Activated CD8-positive, alpha-beta memory T cell treated with anti-CD3 and anti-CD28 coated beads, Interleukin-2, amount 10 ng/mL, durations not matched to agents 7 days and 5 days (primary cell): ENCODE measurements at regions of chr5 and their contacts with region 1.

Region 1: DNA sequence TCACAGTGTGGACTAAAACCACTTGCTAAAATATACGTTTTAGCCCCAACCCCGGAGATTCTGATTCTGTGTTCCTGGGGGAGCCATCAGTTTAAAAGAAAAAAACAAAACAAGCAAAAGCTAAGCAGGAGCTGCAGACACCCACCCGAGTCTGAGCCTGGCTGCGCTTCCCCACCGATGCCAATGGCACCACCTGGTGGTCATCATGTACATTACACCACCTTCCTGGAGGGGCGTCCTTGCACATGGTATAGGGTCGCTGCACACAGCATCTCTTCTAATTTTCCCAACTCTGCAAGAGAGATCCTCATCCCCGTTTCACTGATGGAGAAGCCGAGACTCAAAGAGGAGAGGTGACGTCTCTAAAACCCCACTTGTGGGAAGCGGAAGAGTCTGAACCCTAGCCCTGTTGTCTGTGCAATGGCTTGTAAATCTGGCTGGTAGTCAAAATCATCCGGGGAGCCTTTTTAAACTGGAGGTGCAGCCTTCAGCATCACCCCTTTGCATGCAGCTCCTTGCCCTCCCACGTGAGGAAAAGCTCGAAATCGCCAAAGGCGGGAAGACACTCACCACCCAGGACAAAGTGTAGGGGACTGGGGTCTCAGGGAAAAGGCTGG is 23.1 kb upstream of the CNOT6 start:
- DNase-seq: peak; percentile 66
- ATAC-seq: peak; percentile 83
- H3K4me3 Mint-ChIP-seq: no peak overlapping the region
- H3K27ac Mint-ChIP-seq: no peak overlapping the region
- H3K4me1 Mint-ChIP-seq: no peaks in the 10 kb centered on the region
- H3K27me3 Mint-ChIP-seq: peaks cover 19% of the 10 kb centered on the region

Region 2: DNA sequence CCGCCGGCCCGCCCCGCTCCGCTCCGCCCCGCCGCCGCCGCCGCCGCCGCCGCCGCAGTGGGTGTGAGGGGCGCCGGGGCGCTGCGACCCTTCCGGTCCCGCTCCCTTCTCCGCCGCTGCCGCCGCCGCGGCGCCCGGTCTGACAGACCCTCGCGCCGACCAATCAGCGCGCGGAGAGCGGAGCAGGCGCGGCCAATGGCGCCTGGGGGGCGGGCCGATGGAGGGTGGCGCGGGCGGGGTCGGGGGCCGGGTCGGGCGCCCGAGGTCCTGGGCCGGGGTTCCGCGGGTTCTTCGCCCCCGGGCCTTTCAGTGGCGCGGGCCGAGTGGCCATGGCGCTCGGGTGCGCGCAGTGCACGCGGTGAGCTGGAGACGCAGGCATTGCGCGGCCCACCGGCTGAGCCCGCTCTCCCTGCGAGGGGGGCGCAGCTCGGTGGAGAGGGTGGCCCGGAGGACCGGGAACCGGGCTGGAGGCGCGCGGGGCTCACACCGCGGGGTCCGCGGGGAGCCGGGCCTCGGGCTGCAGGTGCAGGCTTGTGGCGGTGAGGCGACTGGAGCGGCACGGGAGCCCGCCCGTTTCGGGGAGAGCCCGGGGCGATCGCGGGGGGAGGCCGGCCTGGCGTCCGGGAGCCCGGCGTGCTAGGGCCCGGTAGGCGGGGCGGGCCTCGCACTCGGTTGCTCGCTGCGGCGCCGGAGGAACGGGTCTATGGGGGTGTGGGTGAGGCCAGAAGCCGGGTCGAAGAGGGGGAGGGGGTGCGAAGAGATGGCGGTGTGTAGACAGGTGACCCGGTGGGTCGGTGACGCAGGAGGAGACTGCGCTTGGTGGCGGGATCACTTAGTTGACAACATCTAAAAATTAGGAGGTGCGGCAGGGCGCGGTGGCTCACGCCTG is 178.9 kb before region 1 on chr5 and contains the start of gene MAPK9:
- CTCF ChIA-PET with region 1: interaction called, 25 read pairs
- DNase-seq: peak; percentile 87
- ATAC-seq: peak; percentile 86
- H3K4me3 Mint-ChIP-seq: peak within 1 kb of the TSS; percentile 93
- H3K27ac Mint-ChIP-seq: peak within 1 kb of the TSS; percentile 98
- H3K4me1 Mint-ChIP-seq: peaks cover 23% of the 10 kb centered on the region
- H3K27me3 Mint-ChIP-seq: no peaks in the 10 kb centered on the region
- total RNA-seq, gene MAPK9: 40.9 to 44.4 TPM

Region 3: DNA sequence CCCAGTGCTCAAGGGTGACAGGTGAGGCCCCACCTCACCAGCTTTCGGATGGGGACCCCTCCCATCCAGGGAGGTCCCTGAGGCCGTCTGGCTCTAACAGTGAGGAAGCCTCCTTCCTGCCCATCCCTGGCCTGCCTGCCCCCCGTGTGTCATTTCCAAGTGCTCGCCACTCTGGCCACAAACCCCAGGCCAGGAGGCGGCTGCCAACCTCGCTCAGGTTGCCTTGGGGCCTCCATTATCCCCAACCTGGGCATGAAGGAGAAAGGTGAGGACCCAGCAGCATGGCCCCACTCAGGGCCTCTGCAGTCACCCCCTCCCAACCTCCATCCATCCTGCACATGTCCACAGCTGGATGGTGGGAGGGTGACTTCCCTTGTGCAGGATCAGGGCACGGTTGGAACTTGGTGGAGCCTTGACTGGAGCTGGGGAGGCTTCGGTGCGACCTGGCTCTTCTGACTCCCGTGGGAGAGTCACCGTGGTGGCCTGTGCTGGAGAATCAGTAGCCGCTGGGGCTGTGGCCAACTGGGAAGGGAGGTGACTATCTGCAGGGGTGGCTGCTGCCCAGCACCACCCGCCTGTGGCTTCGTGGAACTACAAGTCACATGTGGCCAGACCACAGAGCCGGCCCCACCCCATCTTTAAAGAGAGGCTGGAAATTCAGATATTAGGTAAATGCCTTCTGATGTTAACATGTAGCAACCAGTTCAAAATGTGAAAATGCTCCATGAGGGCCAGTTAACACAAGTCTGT is 80.5 kb before region 1 on chr5:
- CTCF ChIA-PET with region 1: no interaction called
- DNase-seq: no peak
- ATAC-seq: no peak
- H3K4me3 Mint-ChIP-seq: no peak overlapping the region
- H3K27ac Mint-ChIP-seq: no peak overlapping the region
- H3K4me1 Mint-ChIP-seq: no peaks in the 10 kb centered on the region
- H3K27me3 Mint-ChIP-seq: peaks cover 2% of the 10 kb centered on the region